ENCODE measurements at regions of chr11 and their contacts with region 1.

Region 1: DNA sequence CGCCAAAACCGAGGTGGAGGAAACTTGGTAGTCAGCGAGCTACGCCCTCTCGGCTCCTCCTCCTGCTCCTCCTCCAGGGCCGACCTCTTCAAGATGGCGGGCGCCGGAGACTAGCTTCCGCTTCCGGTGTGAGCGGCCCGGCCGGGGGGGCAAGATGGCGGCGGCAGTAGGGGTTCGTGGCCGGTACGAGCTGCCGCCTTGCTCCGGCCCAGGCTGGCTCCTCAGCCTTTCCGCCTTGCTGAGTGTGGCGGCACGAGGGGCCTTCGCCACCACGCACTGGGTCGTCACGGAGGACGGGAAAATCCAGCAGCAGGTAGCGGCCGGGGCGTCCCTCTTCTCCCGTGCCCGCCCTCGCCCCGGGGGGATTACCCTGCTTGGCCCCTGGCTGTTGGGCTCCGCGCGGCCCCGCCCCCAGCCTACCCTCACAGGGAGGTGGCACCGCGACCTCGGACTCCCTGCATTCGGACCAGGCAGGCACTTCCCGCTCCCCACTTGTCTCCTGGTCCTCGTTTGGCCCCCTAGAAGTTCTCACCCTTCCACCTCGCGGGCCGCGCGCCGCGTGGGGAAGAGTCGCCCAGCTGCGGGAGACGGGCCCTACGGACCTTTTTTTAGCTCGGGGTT is at the start of gene TTC17:
- DNase-seq: peak; percentile 88 to 94 (median 90)
- H3K4me3 ChIP-seq: peak within 1 kb of the TSS; percentile 83
- H3K4me3 Mint-ChIP-seq: peak within 1 kb of the TSS; percentile 92 to 100 (median 97)
- H3K27ac ChIP-seq: peak within 1 kb of the TSS; percentile 85
- H3K27ac Mint-ChIP-seq: peak within 1 kb of the TSS; percentile 92 to 100 (median 99)
- H3K4me1 ChIP-seq: peaks cover 14% of the 10 kb centered on the region
- H3K4me1 Mint-ChIP-seq: peaks cover 45 to 58% (median 55%) of the 10 kb centered on the region in 3 donors
- H3K27me3 ChIP-seq: no peaks in the 10 kb centered on the region
- H3K27me3 Mint-ChIP-seq: peaks cover 0 to 5% of the 10 kb centered on the region in 2 donors
- total RNA-seq, gene TTC17: 33.2 to 39.4 TPM

Region 2: DNA sequence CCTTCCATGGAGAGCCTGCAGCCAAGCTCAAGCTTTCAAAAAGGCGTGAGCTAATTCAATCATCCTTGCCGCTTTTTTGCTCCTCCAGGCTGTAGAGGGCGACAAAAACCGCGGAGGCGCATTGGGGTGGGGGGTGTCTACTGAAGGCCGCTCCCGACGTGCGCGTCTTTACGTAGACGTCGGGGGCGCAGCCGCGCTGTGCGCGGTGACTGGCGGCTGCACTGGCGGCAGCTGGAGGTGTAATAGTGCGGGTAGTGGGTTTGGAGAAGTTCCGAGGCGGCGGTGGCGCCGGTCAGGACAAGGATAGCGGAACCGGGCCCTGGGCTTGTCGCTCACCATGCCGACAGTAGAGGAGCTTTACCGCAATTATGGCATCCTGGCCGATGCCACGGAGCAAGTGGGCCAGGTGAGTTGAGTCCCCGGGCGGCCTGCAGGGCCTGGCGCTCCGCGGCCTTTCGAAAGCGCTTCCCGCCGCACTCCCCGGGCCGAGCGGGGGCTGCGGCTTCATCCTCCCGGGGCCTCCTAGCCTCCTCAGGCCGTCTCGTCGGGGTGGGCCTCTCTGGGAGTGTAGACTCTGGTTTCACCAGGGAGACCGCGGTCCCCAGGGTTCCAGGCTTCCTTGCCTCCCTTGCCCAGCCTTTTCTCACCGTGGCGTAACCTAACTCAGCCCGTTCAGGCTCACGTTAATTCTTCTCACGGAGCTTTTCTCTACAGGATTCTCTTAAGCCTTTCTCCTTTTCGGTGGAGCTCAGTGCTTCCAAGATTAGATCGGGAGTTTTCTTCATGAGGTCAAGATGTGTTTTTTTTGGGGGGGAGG is 46.9 kb before region 1 on chr11 and contains the start of gene API5:
- CTCF ChIA-PET with region 1: interaction called, 34 read pairs
- POLR2A ChIA-PET with region 1: interaction called, 17 read pairs
- DNase-seq: peak; percentile 83 to 95 (median 89)
- H3K4me3 ChIP-seq: peak within 1 kb of the TSS; percentile 96
- H3K4me3 Mint-ChIP-seq: peak within 1 kb of the TSS; percentile 95 to 99 (median 97)
- H3K27ac ChIP-seq: peak within 1 kb of the TSS; percentile 87
- H3K27ac Mint-ChIP-seq: peak within 1 kb of the TSS; percentile 87 to 99 (median 97)
- H3K4me1 ChIP-seq: peaks cover 40% of the 10 kb centered on the region
- H3K4me1 Mint-ChIP-seq: peaks cover 48 to 55% (median 54%) of the 10 kb centered on the region in 3 donors
- H3K27me3 ChIP-seq: no peaks in the 10 kb centered on the region
- H3K27me3 Mint-ChIP-seq: peaks cover 0 to 2% of the 10 kb centered on the region in 2 donors
- total RNA-seq, gene API5: 186 to 188 TPM

Region 3: GRCh38 chr11:43376594-43376993 is 17.7 kb after region 1 on chr11:
- CTCF ChIA-PET with region 1: interaction called, 11 read pairs
- POLR2A ChIA-PET with region 1: no interaction called
- DNase-seq: no peak
- H3K4me3 ChIP-seq: no peak overlapping the region
- H3K4me3 Mint-ChIP-seq: no peak overlapping the region
- H3K27ac ChIP-seq: no peak overlapping the region
- H3K27ac Mint-ChIP-seq: peak overlapping the region in 2 of 8 donors; percentile 12 to 26
- H3K4me1 ChIP-seq: no peaks in the 10 kb centered on the region
- H3K4me1 Mint-ChIP-seq: peaks cover 28 to 39% (median 36%) of the 10 kb centered on the region in 3 donors
- H3K27me3 ChIP-seq: no peaks in the 10 kb centered on the region
- H3K27me3 Mint-ChIP-seq: no peaks in the 10 kb centered on the region

Measured in CD8-positive, alpha-beta memory T cell (primary cell).